Activated CD4-positive, alpha-beta memory T cell treated with anti-CD3 and anti-CD28 coated beads for 36 hours (primary cell): ENCODE measurements at regions of chr12 and their contacts with region 1.

Region 1: DNA sequence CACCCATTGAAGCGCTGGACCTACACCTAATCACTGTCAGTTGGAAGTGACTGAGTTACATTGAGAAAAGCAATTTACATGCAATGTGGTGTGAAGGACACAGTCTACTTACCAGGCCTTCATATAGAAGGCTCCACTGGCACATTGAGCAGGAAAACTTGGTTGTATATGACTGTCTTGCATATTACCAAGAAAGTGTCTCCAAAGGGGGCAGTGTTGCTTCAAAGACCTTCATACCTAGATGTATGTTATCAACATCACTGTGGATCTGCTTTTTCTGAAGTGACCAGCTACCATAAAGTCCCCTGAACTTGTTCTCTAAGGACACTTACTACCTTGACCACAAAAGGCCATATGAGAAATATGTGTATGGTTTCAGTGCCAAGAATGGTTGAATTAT is 64.1 kb downstream of the NELL2 start:
- DNase-seq: no peak
- H3K4me3 Mint-ChIP-seq: no peak overlapping the region
- H3K27ac Mint-ChIP-seq: no peak overlapping the region
- H3K4me1 Mint-ChIP-seq: peaks cover 35% of the 10 kb centered on the region
- H3K27me3 Mint-ChIP-seq: no peaks in the 10 kb centered on the region

Region 2: DNA sequence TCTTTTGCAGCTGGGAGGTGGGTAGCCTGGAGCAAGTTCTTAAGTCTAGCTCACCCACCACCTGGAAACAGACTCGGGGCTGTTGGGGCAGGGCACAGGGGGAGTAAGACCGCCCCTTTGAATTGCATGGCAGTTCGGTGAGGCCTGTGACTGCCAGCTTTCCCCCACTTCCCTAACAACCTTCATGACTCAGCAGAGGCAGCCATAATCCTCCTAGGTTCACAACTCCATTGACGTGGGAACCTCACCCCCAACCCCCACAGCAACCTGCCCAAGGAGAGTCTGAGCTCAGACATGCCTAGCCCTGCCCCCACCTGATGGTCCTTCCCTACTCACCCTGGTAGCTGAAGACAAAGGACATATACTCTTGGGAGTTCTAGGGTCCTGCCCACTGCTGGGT is 23.3 kb before region 1 on chr12:
- CTCF ChIA-PET with region 1: interaction called, 12 read pairs
- POLR2A ChIA-PET with region 1: no interaction called
- intact Hi-C with region 1: no loop called
- DNase-seq: no peak
- H3K4me3 Mint-ChIP-seq: no peak overlapping the region
- H3K27ac Mint-ChIP-seq: no peak overlapping the region
- H3K4me1 Mint-ChIP-seq: peaks cover 10% of the 10 kb centered on the region
- H3K27me3 Mint-ChIP-seq: no peaks in the 10 kb centered on the region

Region 3: GRCh38 chr12:44942714-44943113 is 130.7 kb after region 1 on chr12:
- CTCF ChIA-PET with region 1: interaction called, 23 read pairs
- POLR2A ChIA-PET with region 1: no interaction called
- intact Hi-C with region 1: no loop called
- DNase-seq: no peak
- H3K4me3 Mint-ChIP-seq: no peak overlapping the region
- H3K27ac Mint-ChIP-seq: no peak overlapping the region
- H3K4me1 Mint-ChIP-seq: no peaks in the 10 kb centered on the region
- H3K27me3 Mint-ChIP-seq: peaks cover 1% of the 10 kb centered on the region